ENCODE measurements at regions of chr1 and their contacts with region 1.

Region 1: GRCh38 chr1:9942939-9943788 is at the starts of genes LZIC and NMNAT1:
- DNase-seq: peak; percentile 83 to 95
- ATAC-seq: peak; percentile 99
- H3K4me3 ChIP-seq: peak within 1 kb of the TSS; percentile 98
- H3K27ac ChIP-seq: peak within 1 kb of the TSS; percentile 94 to 98
- H3K4me1 ChIP-seq: peaks cover 10% of the 10 kb centered on the region; the same call in 1 of the 3 replicates
- CTCF ChIP-seq: no peak
- EP300 ChIP-seq: no peak
- POLR2A ChIP-seq: peak; percentile 79
- RAD21 ChIP-seq: no peak
- polyA plus RNA-seq, gene LZIC: 23.8 and 29.0 TPM in 2 replicates
- polyA plus RNA-seq, gene NMNAT1: 4.9 and 5.3 TPM in 2 replicates

Region 2: DNA sequence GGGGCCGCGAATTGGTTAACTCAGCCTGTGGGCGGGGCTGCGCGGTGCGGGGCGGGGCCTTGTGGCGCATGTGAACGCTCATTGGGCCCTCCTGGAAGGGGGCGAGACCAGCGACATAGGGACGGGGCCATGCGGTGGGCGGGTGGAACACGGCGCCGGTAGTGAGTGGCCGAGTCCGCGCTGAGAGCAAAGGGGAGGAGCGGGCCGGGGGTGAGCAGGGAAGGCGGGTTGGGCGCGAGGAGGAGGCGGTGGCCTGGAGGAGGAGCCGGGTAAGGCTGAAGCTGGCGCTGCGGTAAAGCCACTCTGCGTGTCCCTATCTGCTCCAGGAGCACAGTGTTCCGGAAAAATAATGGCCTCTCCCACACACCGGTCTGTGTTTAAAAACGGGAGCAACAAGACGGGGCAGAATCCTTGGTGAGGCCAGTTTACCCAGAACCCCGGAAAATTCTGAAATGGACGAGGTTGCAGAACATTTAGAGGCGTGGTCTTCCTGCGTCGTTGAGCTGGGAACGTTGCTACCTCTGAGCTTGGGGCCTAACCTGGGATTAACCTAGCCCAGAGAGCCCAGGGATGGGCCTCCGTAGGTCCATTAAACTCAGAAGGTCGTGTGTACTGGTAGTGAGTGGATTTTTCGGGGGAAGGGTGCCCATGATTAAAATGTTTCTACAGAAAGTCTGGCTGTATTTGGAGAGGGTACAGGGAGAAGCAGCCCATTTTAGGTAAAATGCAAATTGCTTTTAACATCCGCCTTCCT is 32.6 kb before region 1 on chr1:
- CTCF ChIA-PET with region 1: interaction called, 3 read pairs
- POLR2A ChIA-PET with region 1: interaction called, 10 read pairs
- DNase-seq: peak; percentile 90 to 98
- ATAC-seq: peak; percentile 96 to 99
- H3K4me3 ChIP-seq: peak overlapping the region; percentile 51
- H3K27ac ChIP-seq: peak overlapping the region; percentile 79 to 86
- H3K4me1 ChIP-seq: peaks cover 13% of the 10 kb centered on the region; the same call in 2 of the 3 replicates
- CTCF ChIP-seq: no peak
- EP300 ChIP-seq: no peak
- POLR2A ChIP-seq: peak; percentile 73
- RAD21 ChIP-seq: no peak

Region 3: DNA sequence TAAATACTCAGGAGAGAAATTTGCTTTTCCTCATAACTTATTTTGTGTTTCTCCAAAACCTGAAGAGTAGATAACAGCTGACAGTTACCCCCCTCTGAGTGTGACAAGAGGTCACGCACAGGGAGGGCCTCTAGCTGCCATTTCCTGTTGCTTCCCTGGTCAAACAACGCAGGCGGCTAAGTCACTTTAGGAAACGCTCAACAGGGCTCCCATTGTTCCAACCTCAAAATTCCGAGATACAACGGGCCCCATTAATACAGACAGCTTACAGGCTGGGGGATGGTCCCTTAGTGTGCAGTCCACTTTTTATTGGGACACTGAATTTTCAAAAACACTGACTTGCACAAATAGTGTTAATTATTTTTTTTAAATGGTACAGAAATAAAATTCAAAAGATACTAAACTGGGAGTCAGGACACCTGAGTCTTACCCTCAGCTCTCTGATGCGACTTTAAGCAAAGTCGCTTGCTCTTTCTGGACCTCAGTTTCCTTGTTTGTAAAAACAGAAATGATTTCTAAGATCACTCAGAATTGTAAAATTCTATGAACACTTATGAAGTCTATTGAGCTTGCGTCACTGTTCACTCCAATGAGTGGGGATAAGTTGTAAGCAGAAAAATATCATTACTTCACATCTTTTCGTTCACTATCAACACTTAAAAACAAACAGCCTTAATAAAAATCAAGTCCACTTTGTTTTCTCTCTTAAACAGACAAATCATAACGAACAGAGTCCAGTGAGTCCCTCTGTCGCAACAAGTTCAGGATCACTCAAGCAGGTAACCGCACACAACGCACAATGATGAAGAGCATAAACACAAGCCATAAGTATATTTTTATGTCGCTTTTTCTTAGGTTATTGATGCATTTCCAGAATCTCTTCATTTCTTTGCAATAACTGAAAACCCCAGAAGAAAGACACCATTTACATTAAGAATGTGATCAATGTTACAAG is 13.5 kb before region 1 on chr1:
- CTCF ChIA-PET with region 1: interaction called, 11 read pairs
- POLR2A ChIA-PET with region 1: no interaction called
- DNase-seq: no peak
- ATAC-seq: no peak
- H3K4me3 ChIP-seq: no peak overlapping the region
- H3K27ac ChIP-seq: no peak overlapping the region
- H3K4me1 ChIP-seq: no peaks in the 10 kb centered on the region
- CTCF ChIP-seq: no peak
- EP300 ChIP-seq: no peak
- POLR2A ChIP-seq: no peak
- RAD21 ChIP-seq: no peak

Region 4: GRCh38 chr1:10027027-10027426 is 83.9 kb after region 1 on chr1:
- CTCF ChIA-PET with region 1: no interaction called
- POLR2A ChIA-PET with region 1: no interaction called
- DNase-seq: no peak
- ATAC-seq: no peak
- H3K4me3 ChIP-seq: no peak overlapping the region
- H3K27ac ChIP-seq: no peak overlapping the region
- H3K4me1 ChIP-seq: peaks cover 4% of the 10 kb centered on the region; the same call in 2 of the 3 replicates
- CTCF ChIP-seq: no peak
- EP300 ChIP-seq: no peak
- POLR2A ChIP-seq: no peak
- RAD21 ChIP-seq: no peak

Region 5: GRCh38 chr1:10421637-10422036 is 478.5 kb after region 1 on chr1:
- CTCF ChIA-PET with region 1: no interaction called
- POLR2A ChIA-PET with region 1: no interaction called
- DNase-seq: no peak
- ATAC-seq: peak in 1 of 2 experiments; percentile 25; a peak in 3 of 6 replicates
- H3K4me3 ChIP-seq: no peak overlapping the region
- H3K27ac ChIP-seq: peak overlapping the region; percentile 64 to 99
- H3K4me1 ChIP-seq: peaks cover 80% of the 10 kb centered on the region
- CTCF ChIP-seq: no peak
- EP300 ChIP-seq: no peak
- POLR2A ChIP-seq: no peak
- RAD21 ChIP-seq: no peak

Region 6: GRCh38 chr1:10724948-10725847 is 782.0 kb after region 1 on chr1:
- CTCF ChIA-PET with region 1: no interaction called
- POLR2A ChIA-PET with region 1: no interaction called
- DNase-seq: no peak
- ATAC-seq: no peak
- H3K4me3 ChIP-seq: no peak overlapping the region
- H3K27ac ChIP-seq: peak overlapping the region in 1 of 2 experiments; percentile 37; a peak in 2 of 6 replicates
- H3K4me1 ChIP-seq: peaks cover 34% of the 10 kb centered on the region
- CTCF ChIP-seq: no peak
- EP300 ChIP-seq: no peak
- POLR2A ChIP-seq: no peak
- RAD21 ChIP-seq: no peak

Measured in A549 (cell line).